CD8-positive, alpha-beta memory T cell (primary cell): ENCODE measurements at regions of chr19 and their contacts with region 1.

Region 1: DNA sequence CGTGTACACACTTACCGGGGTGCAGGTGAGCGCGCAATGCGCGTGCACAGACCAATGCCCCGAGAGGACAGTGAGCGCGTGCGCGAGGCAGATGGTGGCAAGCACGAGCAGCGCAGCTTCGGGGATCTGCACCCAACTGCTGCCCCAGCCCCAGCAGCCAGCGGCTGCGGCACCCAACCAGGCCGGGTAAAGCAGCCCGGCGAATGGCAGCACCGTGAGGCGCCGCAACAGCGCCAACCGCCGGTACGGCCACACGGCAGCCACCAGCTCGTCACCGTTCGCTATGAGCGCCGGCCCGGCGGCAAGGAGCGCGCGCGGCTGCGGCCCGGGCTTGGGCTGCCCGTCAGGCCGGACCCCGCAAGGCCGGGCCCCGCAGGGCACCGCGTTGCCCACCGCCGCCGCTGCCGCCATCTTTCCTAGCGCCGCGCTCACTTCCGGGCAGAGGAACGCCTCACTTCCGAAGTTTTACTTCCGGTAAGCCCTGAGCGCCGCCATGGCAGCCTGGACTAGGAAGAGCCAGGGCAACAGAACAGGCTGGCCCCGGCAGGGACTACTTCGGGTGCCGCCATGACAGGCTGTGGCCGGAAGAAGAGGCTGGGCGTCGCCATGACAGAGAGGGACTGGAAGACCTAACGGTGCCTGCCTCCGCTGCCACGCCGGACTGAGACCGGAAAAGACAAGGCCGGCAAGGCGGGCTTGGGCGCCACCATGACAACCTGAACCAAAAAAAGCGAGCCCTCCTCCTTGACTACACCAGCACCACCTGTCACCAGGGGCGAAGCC is at the start of gene ATP13A1:
- DNase-seq: peak; percentile 92 to 99 (median 95)
- H3K4me3 ChIP-seq: peak within 1 kb of the TSS; percentile 91
- H3K4me3 Mint-ChIP-seq: peak within 1 kb of the TSS; percentile 86 to 96 (median 92)
- H3K27ac ChIP-seq: peak within 1 kb of the TSS; percentile 94
- H3K27ac Mint-ChIP-seq: peak within 1 kb of the TSS; percentile 85 to 99 (median 98)
- H3K4me1 ChIP-seq: peaks cover 37% of the 10 kb centered on the region
- H3K4me1 Mint-ChIP-seq: peaks cover 33 to 51% (median 44%) of the 10 kb centered on the region in 3 donors
- H3K27me3 ChIP-seq: no peaks in the 10 kb centered on the region
- H3K27me3 Mint-ChIP-seq: peaks cover 0 to 1% of the 10 kb centered on the region in 2 donors
- total RNA-seq, gene ATP13A1: 92.1 to 93.6 TPM

Region 2: DNA sequence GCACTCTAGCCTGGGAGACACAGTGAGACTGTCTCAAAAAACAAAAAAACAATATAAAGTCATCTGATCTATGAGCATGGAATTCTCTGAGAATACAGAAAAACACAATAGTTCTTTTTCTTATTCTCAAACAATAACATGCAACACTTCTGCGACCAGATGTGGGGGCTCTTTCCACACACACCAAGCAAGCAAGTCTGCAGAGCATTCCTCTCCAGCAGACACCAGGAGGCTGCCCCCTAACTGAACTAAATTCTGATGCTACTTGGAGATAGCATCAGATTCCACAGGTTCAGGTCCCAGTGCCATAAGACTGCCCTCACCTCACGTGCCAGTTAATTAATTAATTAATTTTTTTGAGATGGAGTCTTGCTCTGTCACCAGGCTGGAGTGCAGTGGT is 32.9 kb after region 1 on chr19:
- CTCF ChIA-PET with region 1: no interaction called
- POLR2A ChIA-PET with region 1: interaction called, 10 read pairs
- DNase-seq: no peak
- H3K4me3 ChIP-seq: no peak overlapping the region
- H3K4me3 Mint-ChIP-seq: no peak overlapping the region
- H3K27ac ChIP-seq: no peak overlapping the region
- H3K27ac Mint-ChIP-seq: peak overlapping the region in 1 of 8 donors; percentile 38
- H3K4me1 ChIP-seq: no peaks in the 10 kb centered on the region
- H3K4me1 Mint-ChIP-seq: peaks cover 0 to 3% (median 3%) of the 10 kb centered on the region in 3 donors
- H3K27me3 ChIP-seq: no peaks in the 10 kb centered on the region
- H3K27me3 Mint-ChIP-seq: no peaks in the 10 kb centered on the region

Region 3: GRCh38 chr19:19776041-19777008 is 112.9 kb after region 1 on chr19:
- CTCF ChIA-PET with region 1: interaction called, 9 read pairs
- POLR2A ChIA-PET with region 1: interaction called, 23 read pairs
- DNase-seq: peak; percentile 85 to 92 (median 88)
- H3K4me3 ChIP-seq: peak overlapping the region; percentile 99
- H3K4me3 Mint-ChIP-seq: peak overlapping the region; percentile 90 to 100 (median 98)
- H3K27ac ChIP-seq: peak overlapping the region; percentile 70
- H3K27ac Mint-ChIP-seq: peak overlapping the region; percentile 76 to 99 (median 98)
- H3K4me1 ChIP-seq: peaks cover 24% of the 10 kb centered on the region
- H3K4me1 Mint-ChIP-seq: peaks cover 51 to 71% (median 54%) of the 10 kb centered on the region in 3 donors
- H3K27me3 ChIP-seq: no peaks in the 10 kb centered on the region
- H3K27me3 Mint-ChIP-seq: no peaks in the 10 kb centered on the region

Region 4: GRCh38 chr19:19788015-19788414 is 124.6 kb after region 1 on chr19:
- CTCF ChIA-PET with region 1: no interaction called
- POLR2A ChIA-PET with region 1: no interaction called
- DNase-seq: no peak
- H3K4me3 ChIP-seq: no peak overlapping the region
- H3K4me3 Mint-ChIP-seq: no peak overlapping the region
- H3K27ac ChIP-seq: no peak overlapping the region
- H3K27ac Mint-ChIP-seq: peak overlapping the region in 1 of 8 donors; percentile 21
- H3K4me1 ChIP-seq: no peaks in the 10 kb centered on the region
- H3K4me1 Mint-ChIP-seq: peaks cover 18 to 31% (median 23%) of the 10 kb centered on the region in 3 donors
- H3K27me3 ChIP-seq: no peaks in the 10 kb centered on the region
- H3K27me3 Mint-ChIP-seq: no peaks in the 10 kb centered on the region

Region 5: GRCh38 chr19:19865739-19866481 is 202.5 kb after region 1 on chr19 and contains the start of gene ZNF253:
- CTCF ChIA-PET with region 1: no interaction called
- POLR2A ChIA-PET with region 1: interaction called, 29 read pairs
- DNase-seq: peak; percentile 89 to 95 (median 92)
- H3K4me3 ChIP-seq: peak within 1 kb of the TSS; percentile 98
- H3K4me3 Mint-ChIP-seq: peak within 1 kb of the TSS; percentile 98 to 100 (median 100)
- H3K27ac ChIP-seq: peak within 1 kb of the TSS; percentile 91
- H3K27ac Mint-ChIP-seq: peak within 1 kb of the TSS; percentile 90 to 99 (median 98)
- H3K4me1 ChIP-seq: peaks cover 18% of the 10 kb centered on the region
- H3K4me1 Mint-ChIP-seq: peaks cover 33 to 35% (median 33%) of the 10 kb centered on the region in 3 donors
- H3K27me3 ChIP-seq: no peaks in the 10 kb centered on the region
- H3K27me3 Mint-ChIP-seq: no peaks in the 10 kb centered on the region
- total RNA-seq, gene ZNF253: 14.0 to 16.1 TPM